ENCODE measurements at regions of chr4 and their contacts with region 1.

Region 1: GRCh38 chr4:121800961-121801714 is at the start of gene EXOSC9:
- DNase-seq: peak; percentile 95
- ATAC-seq: peak; percentile 87
- H3K4me3 Mint-ChIP-seq: peak within 1 kb of the TSS; percentile 87
- H3K27ac Mint-ChIP-seq: peak within 1 kb of the TSS; percentile 93
- H3K4me1 Mint-ChIP-seq: peaks cover 37% of the 10 kb centered on the region
- H3K27me3 Mint-ChIP-seq: no peaks in the 10 kb centered on the region
- total RNA-seq, gene EXOSC9: 48.1 to 50.5 TPM

Region 2: GRCh38 chr4:121823505-121824170 is 22.5 kb after region 1 on chr4 and contains the start of gene CCNA2:
- POLR2A ChIA-PET with region 1: interaction called, 39 read pairs
- DNase-seq: peak; percentile 92
- ATAC-seq: peak; percentile 93
- H3K4me3 Mint-ChIP-seq: peak within 1 kb of the TSS; percentile 98
- H3K27ac Mint-ChIP-seq: peak within 1 kb of the TSS; percentile 98
- H3K4me1 Mint-ChIP-seq: peaks cover 19% of the 10 kb centered on the region
- H3K27me3 Mint-ChIP-seq: no peaks in the 10 kb centered on the region
- total RNA-seq, gene CCNA2: 84.8 to 86.4 TPM

Measured in activated naive CD8-positive, alpha-beta T cell treated with anti-CD3 and anti-CD28 coated beads, Interleukin-2, amount 10 ng/mL, durations not matched to agents 7 days and 5 days (primary cell).